ENCODE measurements at regions of chr4 and their contacts with region 1.

Region 1: DNA sequence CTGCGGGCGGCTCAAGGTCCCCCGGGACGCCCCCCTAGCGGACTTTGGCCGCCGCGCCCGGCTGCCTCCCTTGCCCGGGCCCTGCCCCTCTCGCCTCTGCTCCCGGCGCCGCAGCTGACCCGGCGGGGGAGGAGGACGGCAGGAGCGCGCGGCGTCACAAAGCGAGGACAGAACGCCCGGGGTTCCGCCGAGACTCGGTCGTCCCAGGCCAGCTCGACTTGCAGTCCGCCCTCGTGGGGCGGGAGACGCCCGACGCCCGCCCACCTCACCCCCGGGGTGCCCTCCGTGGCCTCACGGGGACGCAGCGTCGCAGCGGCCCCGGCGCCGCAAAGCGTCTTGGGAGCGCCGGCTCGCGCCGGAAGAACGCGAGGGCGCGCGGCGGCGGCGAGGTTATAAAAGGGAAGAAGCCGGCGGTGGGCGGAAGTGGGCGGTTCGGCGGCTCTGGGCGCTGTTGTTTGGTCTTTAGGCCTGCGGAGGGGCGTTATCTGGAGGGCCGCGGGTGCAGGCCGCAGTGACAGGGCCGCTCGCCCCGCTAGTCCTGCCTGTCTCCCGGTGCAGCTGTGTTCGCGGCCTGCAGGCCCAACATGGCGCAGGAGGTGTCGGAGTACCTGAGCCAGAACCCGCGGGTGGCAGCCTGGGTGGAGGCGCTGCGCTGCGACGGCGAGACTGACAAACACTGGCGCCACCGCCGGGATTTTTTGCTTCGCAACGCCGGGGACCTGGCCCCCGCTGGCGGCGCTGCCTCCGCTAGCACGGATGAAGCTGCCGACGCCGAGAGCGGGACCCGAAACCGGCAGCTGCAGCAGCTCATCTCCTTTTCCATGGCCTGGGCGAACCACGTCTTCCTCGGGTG is at the start of gene CDKN2AIP:
- H3K4me3 Mint-ChIP-seq: peak within 1 kb of the TSS; percentile 93
- H3K27ac Mint-ChIP-seq: peak within 1 kb of the TSS; percentile 96
- H3K4me1 Mint-ChIP-seq: peaks cover 30% of the 10 kb centered on the region
- H3K27me3 Mint-ChIP-seq: no peaks in the 10 kb centered on the region

Region 2: DNA sequence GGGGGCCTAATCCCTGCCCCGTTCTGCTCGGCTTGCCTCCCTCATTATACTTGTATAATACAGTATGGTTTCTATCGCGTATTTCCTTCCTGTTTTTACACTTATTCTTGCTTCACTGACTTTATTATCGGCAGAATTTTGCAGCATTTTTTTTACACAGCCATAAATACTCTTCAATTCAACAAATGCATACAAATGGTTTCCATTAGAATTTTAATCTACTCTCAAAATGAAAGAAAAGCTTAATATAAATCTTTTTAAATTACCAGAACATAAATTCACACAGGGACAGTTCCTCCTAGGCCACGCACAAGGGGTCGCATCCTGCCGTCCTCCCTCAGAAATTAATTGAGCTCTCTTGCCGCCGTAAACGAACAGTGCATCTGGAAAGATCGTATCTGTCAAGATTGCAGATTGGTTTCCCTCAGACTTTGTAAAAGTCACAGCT is 570.1 kb before region 1 on chr4:
- intact Hi-C with region 1: no loop called
- H3K4me3 Mint-ChIP-seq: no peak overlapping the region
- H3K27ac Mint-ChIP-seq: no peak overlapping the region
- H3K4me1 Mint-ChIP-seq: peaks cover 11% of the 10 kb centered on the region
- H3K27me3 Mint-ChIP-seq: peaks cover 10% of the 10 kb centered on the region

Region 3: DNA sequence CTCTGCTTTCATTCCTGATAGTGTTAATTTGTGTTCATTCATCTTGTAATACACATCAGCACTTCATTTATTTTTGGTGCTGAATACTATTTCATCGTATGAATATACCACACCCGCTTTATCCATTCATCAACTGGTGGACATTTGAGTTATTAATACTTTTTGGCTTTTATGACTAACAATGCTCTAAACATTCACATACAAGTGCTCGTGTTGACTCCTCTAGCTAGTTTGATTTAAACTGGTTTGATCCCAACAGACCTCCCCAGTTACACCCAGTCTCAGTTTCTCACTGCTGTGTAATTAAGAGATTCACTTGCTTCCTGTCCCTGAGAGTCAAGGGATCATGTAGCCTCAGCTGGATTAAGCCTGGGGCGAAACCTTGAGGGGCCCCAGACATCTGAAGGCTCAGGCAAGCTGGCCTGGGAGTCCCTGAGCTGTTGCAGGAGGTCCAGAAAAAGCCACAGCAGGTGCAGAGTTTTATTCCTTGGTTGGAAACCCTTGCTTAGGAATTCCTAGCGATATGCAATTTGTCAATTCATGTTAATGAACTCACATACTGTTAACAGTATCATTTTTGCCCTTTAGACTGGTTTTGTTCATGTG is 69.4 kb before region 1 on chr4:
- intact Hi-C with region 1: no loop called
- H3K4me3 Mint-ChIP-seq: no peak overlapping the region
- H3K27ac Mint-ChIP-seq: no peak overlapping the region
- H3K4me1 Mint-ChIP-seq: no peaks in the 10 kb centered on the region
- H3K27me3 Mint-ChIP-seq: peaks cover 6% of the 10 kb centered on the region

Region 4: GRCh38 chr4:183398227-183399125 is 46.0 kb before region 1 on chr4:
- intact Hi-C with region 1: loop called (anchors 1 kb)
- H3K4me3 Mint-ChIP-seq: peak overlapping the region; percentile 82
- H3K27ac Mint-ChIP-seq: peak overlapping the region; percentile 97
- H3K4me1 Mint-ChIP-seq: peaks cover 42% of the 10 kb centered on the region
- H3K27me3 Mint-ChIP-seq: peaks cover 10% of the 10 kb centered on the region

Region 5: DNA sequence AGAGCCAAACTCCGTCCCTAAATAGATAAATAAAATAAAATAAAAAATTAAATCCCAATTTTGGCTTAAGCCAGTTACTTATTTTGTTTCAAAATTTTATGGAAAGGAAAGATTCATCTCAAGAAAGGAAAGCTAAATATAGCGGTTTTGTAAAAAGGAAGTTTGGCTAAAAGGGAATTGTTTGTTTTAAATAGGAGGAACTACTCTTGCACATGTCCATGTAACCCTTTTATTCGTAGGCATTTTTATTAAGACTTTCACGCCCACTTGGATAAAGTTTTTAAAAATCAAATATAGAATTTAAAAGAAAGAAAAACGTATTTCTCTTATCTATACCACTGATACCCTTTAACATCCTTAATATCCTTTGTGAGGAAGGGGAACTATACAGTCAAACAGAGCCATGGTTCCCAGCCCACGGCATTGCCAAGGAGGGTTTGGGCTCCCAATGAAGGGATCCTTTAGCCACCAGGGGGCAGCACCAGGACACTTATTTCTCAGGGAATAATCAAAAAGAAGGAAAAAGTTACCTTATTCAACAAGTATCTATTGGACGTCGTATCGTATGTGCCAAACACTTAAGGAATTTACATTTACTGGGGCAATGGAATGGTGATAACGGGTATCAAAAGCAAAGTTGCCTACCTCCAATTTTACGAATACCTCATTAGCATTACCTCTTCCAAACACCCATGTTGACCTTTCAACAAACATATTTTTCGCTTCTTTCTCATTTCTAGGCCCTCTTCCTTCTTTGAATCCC is 27.7 kb after region 1 on chr4:
- intact Hi-C with region 1: loop called (anchors 2 kb)
- H3K4me3 Mint-ChIP-seq: no peak overlapping the region
- H3K27ac Mint-ChIP-seq: peak overlapping the region; percentile 40
- H3K4me1 Mint-ChIP-seq: peaks cover 28% of the 10 kb centered on the region
- H3K27me3 Mint-ChIP-seq: no peaks in the 10 kb centered on the region

Region 6: GRCh38 chr4:183504064-183504929 is 59.9 kb after region 1 on chr4:
- intact Hi-C with region 1: loop called (anchors 1 kb)
- H3K4me3 Mint-ChIP-seq: peak overlapping the region; percentile 86
- H3K27ac Mint-ChIP-seq: peak overlapping the region; percentile 99
- H3K4me1 Mint-ChIP-seq: peaks cover 25% of the 10 kb centered on the region
- H3K27me3 Mint-ChIP-seq: no peaks in the 10 kb centered on the region

Region 7: GRCh38 chr4:183618681-183619080 is 174.2 kb after region 1 on chr4:
- intact Hi-C with region 1: no loop called
- H3K4me3 Mint-ChIP-seq: no peak overlapping the region
- H3K27ac Mint-ChIP-seq: no peak overlapping the region
- H3K4me1 Mint-ChIP-seq: peaks cover 20% of the 10 kb centered on the region
- H3K27me3 Mint-ChIP-seq: peaks cover 1% of the 10 kb centered on the region

Region 8: GRCh38 chr4:183659029-183659871 is 214.8 kb after region 1 on chr4 and contains the starts of genes RWDD4 and TRAPPC11:
- intact Hi-C with region 1: loop called (anchors 1 kb)
- H3K4me3 Mint-ChIP-seq: peak within 1 kb of the TSS; percentile 87
- H3K27ac Mint-ChIP-seq: peak within 1 kb of the TSS; percentile 91
- H3K4me1 Mint-ChIP-seq: peaks cover 33% of the 10 kb centered on the region
- H3K27me3 Mint-ChIP-seq: no peaks in the 10 kb centered on the region